AG04449 (cell line): ENCODE measurements at regions of chr2 and their contacts with region 1.

Region 1: DNA sequence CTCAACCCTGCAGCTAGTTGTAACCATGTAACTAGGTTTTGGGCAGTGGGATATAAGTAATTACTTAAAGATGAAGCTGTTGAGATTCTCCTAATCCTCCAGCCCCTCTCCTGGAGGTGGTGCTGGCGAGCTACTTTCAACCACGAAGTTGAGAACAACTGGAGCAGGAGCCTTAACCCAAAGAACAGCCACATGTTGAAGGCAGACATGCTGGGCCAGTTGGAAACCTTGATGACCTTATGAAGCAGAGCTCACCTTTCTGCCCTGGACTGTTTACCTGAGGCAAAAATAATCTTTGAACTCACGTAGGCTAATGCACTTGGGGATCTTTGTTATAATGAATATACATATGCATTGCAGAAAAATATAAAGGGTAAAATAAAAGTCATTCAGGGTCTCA is 89.6 kb upstream of the NPAS2 start:
- DNase-seq: no peak
- H3K4me3 ChIP-seq: no peak overlapping the region
- CTCF ChIP-seq: peak; percentile 77

Region 2: GRCh38 chr2:100707016-100707947 is 23.1 kb before region 1 on chr2:
- CTCF ChIA-PET with region 1: interaction called, 11 read pairs
- POLR2A ChIA-PET with region 1: no interaction called
- DNase-seq: no peak
- H3K4me3 ChIP-seq: no peak overlapping the region
- CTCF ChIP-seq: no peak

Region 3: GRCh38 chr2:100870652-100871531 is 140.5 kb after region 1 on chr2:
- CTCF ChIA-PET with region 1: interaction called, 10 read pairs
- POLR2A ChIA-PET with region 1: no interaction called
- DNase-seq: no peak
- H3K4me3 ChIP-seq: no peak overlapping the region
- CTCF ChIP-seq: no peak

Region 4: DNA sequence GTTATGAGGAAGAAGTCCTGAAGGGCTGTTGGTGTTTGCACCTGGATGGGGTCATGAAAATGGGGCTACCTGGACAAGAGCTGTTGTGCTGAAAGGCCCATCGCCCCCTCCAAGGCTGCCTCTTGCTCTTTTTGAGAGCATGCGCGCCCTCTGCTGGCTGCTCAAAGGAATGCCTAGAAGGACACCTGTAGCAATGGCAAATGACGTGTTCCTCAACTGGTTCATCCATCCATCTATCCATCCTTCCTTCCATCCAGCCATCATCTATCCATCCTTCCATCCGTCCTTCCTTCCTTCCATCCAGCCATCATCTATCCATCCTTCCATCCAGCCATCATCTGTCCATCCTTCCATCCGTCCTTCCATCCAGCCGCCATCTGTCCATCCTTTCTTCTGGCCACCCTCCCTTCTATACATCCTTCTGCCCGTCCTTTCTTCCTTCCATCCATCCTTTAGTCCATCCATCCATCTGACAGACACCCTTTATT is 254.6 kb after region 1 on chr2:
- CTCF ChIA-PET with region 1: interaction called, 185 read pairs
- POLR2A ChIA-PET with region 1: no interaction called
- DNase-seq: no peak
- H3K4me3 ChIP-seq: no peak overlapping the region
- CTCF ChIP-seq: peak; percentile 91

Region 5: DNA sequence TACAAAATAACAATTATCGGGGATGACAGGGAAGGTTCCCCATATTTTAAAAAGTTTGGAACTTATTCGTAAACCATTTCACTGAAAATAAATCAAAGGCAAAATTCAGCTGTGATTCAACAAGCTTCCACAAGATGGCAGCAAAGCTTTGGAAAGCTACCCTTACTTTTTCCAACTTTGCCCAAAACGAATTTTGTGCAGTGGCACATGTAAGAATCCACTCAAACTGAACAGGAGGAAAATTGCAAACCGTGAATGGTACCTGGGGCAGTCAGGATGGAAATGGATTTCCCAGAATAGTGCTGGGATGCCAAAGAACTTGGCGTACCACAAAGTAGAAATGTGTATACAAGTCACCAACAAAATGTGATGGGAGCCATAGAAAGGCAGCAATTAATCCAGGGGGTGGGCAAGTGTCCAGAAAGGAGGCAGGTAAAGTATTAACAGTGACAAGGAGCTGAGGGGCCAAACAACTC is 282.4 kb after region 1 on chr2:
- CTCF ChIA-PET with region 1: interaction called, 47 read pairs
- POLR2A ChIA-PET with region 1: interaction called, 3 read pairs
- DNase-seq: no peak
- H3K4me3 ChIP-seq: no peak overlapping the region
- CTCF ChIP-seq: peak; percentile 62